ENCODE measurements at regions of chr15 and their contacts with region 1.

Region 1: GRCh38 chr15:38093931-38094330 is 158.7 kb upstream of the SPRED1 start:
- DNase-seq: no peak
- H3K4me3 ChIP-seq: no peak overlapping the region
- H3K4me1 ChIP-seq: no peaks in the 10 kb centered on the region; the same call in 1 of the 2 replicates
- H3K27me3 ChIP-seq: no peaks in the 10 kb centered on the region

Region 2: DNA sequence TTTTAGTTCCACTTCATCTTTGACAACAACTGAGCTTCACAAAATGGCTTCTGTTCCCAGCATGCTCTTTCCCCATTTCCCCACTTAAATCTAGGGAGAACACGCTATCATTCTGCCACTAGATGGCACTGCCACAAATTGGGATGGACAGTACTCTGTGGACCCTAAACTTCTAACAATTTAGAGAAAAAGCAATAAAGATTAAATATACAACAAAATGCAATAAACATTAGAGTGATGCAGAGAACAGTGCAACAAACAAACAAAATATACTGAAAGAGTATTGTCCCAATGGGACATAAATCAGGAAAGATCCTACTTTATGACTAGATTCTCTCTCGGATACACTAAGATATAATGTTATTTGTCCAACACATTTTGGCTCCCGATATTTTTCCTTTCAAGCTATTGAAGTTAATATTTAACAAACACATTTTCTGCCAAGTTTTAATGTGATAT is 329.2 kb before region 1 on chr15:
- in situ Hi-C with region 1: no loop called
- DNase-seq: peak; percentile 42 to 44
- H3K4me3 ChIP-seq: no peak overlapping the region
- H3K4me1 ChIP-seq: no peaks in the 10 kb centered on the region
- H3K27me3 ChIP-seq: no peaks in the 10 kb centered on the region

Region 3: GRCh38 chr15:38154837-38155236 is 60.9 kb after region 1 on chr15:
- in situ Hi-C with region 1: loop called (anchors 10 kb)
- DNase-seq: no peak
- H3K4me3 ChIP-seq: no peak overlapping the region
- H3K4me1 ChIP-seq: no peaks in the 10 kb centered on the region
- H3K27me3 ChIP-seq: no peaks in the 10 kb centered on the region

Measured in HAP-1 (cell line).